G401 (cell line): ENCODE measurements at regions of chr1 and their contacts with region 1.

Region 1: GRCh38 chr1:26102526-26102925 is 9.1 kb upstream of the PDIK1L start:
- DNase-seq: no peak

Region 2: DNA sequence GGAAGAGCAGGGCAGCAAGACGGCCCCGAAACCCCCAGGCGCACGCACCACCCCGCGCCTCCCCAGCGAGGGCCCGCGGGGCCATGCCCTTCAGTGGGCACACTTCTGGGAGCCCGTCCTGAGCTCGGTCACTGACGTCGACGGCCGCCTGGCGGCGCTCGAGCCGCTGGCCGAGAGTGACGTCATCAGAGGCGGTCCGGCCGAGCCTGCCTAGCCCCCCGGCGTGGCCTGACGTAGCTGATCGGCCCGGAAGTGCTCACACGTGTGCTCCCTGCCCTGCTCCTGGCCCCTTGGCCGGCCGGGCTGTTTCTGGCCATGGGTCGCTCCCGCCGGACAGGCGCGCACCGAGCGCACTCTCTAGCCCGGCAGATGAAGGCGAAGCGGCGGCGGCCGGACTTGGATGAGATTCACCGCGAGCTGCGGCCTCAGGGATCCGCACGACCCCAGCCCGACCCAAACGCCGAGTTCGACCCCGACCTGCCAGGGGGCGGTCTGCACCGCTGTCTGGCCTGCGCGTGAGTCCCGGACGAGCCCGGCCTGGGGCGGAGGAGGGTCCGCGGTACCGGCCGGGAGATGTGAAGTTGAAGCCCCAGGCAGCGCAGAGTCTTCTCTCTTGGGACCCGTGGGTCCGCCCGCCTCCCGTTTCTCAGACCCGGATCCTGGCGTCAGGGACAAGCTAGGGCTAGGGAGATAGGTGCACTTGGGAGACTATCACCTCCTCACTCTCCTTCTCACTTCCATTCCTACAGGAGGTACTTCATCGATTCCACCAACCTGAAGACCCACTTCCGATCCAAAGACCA is 67.3 kb after region 1 on chr1 and contains the start of gene ZNF593:
- in situ Hi-C with region 1: loop called (anchors 5 kb)
- DNase-seq: peak; percentile 91
- total RNA-seq, gene ZNF593: 46.4 and 97.1 TPM in 2 replicates

Region 3: GRCh38 chr1:26279456-26280332 is 177.2 kb after region 1 on chr1 and contains the start of gene SH3BGRL3:
- in situ Hi-C with region 1: loop called (anchors 10 kb)
- DNase-seq: peak; percentile 80
- total RNA-seq, gene SH3BGRL3: 5.0 and 7.4 TPM in 2 replicates